ENCODE measurements at regions of chr10 and their contacts with region 1.

Region 1: GRCh38 chr10:122213766-122214165 is 57.3 kb upstream of the BTBD16 start:
- DNase-seq: no peak
- ATAC-seq: peak in 7 of 8 donors; percentile 30 to 67 (median 58)
- H3K4me3 ChIP-seq: no peak overlapping the region
- H3K27ac ChIP-seq: no peak overlapping the region
- H3K4me1 ChIP-seq: peaks cover 0 to 12% (median 0%) of the 10 kb centered on the region in 9 donors
- H3K27me3 ChIP-seq: no peaks in the 10 kb centered on the region
- CTCF ChIP-seq: peak in 3 of 9 donors; percentile 18 to 35 (median 31)

Region 2: DNA sequence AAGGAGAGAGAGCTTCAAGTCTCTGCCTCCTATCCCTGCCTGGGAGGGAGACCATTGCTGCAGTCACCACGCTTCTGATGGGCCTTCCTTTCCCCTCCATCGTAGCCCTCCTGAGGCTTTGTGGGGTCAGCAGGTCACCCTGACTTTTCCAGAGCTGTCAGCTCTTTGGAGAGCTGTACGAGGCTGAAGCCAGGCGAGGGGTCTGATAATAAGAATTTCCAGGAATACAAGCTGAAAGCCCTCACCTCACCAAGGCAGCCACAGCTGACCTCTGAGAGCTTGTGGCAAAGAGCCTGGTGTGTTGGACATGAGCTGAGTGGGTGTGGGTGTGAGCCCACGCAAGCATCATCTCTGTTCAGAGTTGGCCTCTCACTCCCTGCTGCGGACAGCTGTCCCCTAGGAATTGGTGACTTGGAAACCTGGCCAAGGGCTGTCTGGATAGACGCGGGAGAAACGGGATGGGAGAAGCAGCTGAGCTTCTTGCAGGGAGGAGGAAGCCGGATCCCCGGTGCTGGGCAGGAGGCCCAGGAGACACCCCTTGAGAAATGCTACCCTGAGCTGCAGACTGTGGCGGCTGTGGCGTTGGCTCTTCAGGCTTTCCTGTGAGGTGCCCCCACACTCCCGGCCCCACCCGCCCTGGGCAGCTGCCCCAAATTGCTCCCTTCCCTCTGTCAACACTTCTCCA is 64.7 kb before region 1 on chr10:
- intact Hi-C with region 1: loop called in 4 of 10 experiments (anchors 5 to 10 kb)
- DNase-seq: peak; percentile 84 to 88
- ATAC-seq: peak; percentile 57 to 72 (median 67)
- H3K4me3 ChIP-seq: peak overlapping the region in 5 of 10 donors; percentile 21 to 32 (median 23)
- H3K27ac ChIP-seq: peak overlapping the region; percentile 40 to 90 (median 82)
- H3K4me1 ChIP-seq: peaks cover 33 to 85% (median 71%) of the 10 kb centered on the region in 9 donors
- H3K27me3 ChIP-seq: no peaks in the 10 kb centered on the region
- CTCF ChIP-seq: no peak

Region 3: GRCh38 chr10:122362621-122363020 is 148.9 kb after region 1 on chr10:
- intact Hi-C with region 1: no loop called
- DNase-seq: no peak
- ATAC-seq: no peak
- H3K4me3 ChIP-seq: no peak overlapping the region
- H3K27ac ChIP-seq: no peak overlapping the region
- H3K4me1 ChIP-seq: peaks cover 0 to 4% (median 0%) of the 10 kb centered on the region in 9 donors
- H3K27me3 ChIP-seq: no peaks in the 10 kb centered on the region
- CTCF ChIP-seq: no peak

Measured in heart right ventricle (tissue), 16 donors.